Heart right ventricle (tissue), 16 donors: ENCODE measurements at regions of chrX and their contacts with region 1.

Region 1: GRCh38 chrX:121195719-121196118 is 148.3 kb downstream of the GLUD2 start:
- DNase-seq: no peak
- ATAC-seq: no peak
- H3K4me3 ChIP-seq: no peak overlapping the region
- H3K27ac ChIP-seq: no peak overlapping the region
- H3K4me1 ChIP-seq: no peaks in the 10 kb centered on the region
- H3K27me3 ChIP-seq: no peaks in the 10 kb centered on the region
- CTCF ChIP-seq: no peak

Region 2: DNA sequence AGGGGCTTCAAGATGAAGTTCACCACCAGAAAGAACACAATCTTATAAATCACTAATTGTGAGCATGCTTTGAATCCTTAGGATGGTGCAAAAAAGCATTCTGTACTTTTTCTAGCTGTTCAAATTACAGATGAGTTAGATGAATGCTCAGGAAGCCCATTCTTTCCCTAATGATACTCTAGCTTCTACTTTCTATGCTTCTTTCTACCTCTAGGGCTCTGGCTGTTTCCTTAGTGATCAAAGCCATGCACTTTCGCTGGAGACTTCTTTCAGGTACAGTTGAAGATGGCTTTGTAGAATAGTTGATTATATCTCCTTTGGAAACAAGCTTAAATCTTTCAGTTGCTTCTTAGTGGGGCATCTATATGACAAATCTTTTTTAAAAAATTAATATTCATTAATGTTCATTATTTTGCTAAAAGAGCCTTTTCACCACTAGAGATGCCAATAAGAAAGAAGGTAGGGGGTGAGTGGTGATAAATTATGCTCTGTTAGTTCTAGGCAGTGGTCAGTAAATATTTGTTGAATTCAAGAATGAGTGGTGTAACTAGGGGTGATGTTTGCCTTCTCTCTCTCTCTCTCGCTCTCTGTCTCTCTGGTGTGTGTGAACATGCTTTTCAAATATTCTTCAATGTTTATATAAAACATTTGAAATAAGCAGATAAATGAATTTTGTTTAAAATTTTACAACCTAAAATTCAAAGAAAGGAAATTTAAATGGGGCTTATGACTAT is 21.1 kb after region 1 on chrX:
- intact Hi-C with region 1: no loop called
- DNase-seq: no peak
- ATAC-seq: no peak
- H3K4me3 ChIP-seq: no peak overlapping the region
- H3K27ac ChIP-seq: no peak overlapping the region
- H3K4me1 ChIP-seq: no peaks in the 10 kb centered on the region
- H3K27me3 ChIP-seq: no peaks in the 10 kb centered on the region
- CTCF ChIP-seq: no peak

Region 3: GRCh38 chrX:121245763-121246162 is 50.0 kb after region 1 on chrX:
- intact Hi-C with region 1: no loop called
- DNase-seq: no peak
- ATAC-seq: no peak
- H3K4me3 ChIP-seq: no peak overlapping the region
- H3K27ac ChIP-seq: no peak overlapping the region
- H3K4me1 ChIP-seq: no peaks in the 10 kb centered on the region
- H3K27me3 ChIP-seq: no peaks in the 10 kb centered on the region
- CTCF ChIP-seq: no peak

Region 4: DNA sequence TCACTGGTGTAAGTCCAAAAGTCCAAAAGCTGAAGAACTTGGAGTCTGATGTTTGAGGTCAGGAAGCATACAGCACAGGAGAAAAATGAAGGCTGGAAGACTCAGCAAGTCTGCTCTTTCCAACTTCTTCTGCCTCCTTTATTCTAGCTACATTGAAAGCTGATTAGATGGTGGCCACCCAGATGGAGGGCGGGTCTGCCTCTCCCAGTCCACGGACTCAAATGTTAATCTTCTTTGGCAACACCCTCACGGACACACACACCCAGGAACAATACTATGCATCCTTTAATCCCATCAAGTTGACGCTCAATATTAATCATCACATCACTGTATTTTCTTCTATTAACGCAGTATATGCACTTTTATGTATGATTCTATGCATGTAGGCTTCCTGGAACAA is 1056.7 kb after region 1 on chrX:
- intact Hi-C with region 1: loop called in 1 of 10 experiments (anchors 5 kb)
- DNase-seq: no peak
- ATAC-seq: no peak
- H3K4me3 ChIP-seq: no peak overlapping the region
- H3K27ac ChIP-seq: no peak overlapping the region
- H3K4me1 ChIP-seq: no peaks in the 10 kb centered on the region
- H3K27me3 ChIP-seq: no peaks in the 10 kb centered on the region
- CTCF ChIP-seq: no peak